Activated CD4-positive, alpha-beta T cell treated with anti-CD3 and anti-CD28 coated beads, Interleukin-2, amount 10 ng/mL, durations not matched to agents 7 days and 5 days (primary cell): ENCODE measurements at regions of chr3 and their contacts with region 1.

Region 1: DNA sequence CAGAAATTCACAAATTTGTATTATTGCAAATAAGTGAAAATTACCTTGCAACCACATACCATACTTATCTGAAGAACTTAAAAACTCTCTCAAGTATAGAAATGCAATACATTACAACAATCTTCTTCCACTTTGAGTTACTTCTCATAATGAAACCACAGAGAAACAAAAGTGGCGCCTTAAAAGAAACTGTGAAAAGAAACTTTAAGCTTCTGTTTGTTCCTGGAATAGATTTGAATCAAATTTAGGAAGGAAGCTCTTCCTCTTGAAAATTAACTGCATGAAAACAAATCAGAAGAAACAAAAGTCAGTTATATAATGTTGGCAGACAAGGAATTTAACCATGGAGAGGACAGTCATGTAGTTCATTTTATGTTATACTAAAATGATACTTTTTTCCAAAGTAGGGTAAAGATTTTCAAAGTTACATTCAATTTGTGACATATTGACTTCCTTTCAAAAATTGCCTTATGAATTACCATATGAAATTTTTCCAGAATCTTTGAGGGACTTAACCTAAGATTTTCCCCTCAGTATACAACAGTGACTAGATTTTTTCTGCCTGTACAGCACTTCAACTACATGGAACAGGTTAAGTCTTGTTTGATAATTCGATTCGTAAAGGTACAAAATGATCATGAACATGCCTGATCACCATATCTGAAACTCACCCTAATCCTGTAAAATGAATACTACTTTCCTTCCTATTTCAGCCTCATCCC is 57.6 kb upstream of the TNFSF10 start:
- DNase-seq: no peak
- H3K4me3 Mint-ChIP-seq: peak overlapping the region; percentile 64
- H3K27ac Mint-ChIP-seq: peak overlapping the region; percentile 93
- H3K4me1 Mint-ChIP-seq: peaks cover 96% of the 10 kb centered on the region
- H3K27me3 Mint-ChIP-seq: no peaks in the 10 kb centered on the region

Region 2: GRCh38 chr3:172522871-172523818 is 57.7 kb before region 1 on chr3 and contains the start of gene TNFSF10:
- CTCF ChIA-PET with region 1: interaction called, 7 read pairs
- POLR2A ChIA-PET with region 1: interaction called, 17 read pairs
- DNase-seq: peak; percentile 85
- H3K4me3 Mint-ChIP-seq: peak within 1 kb of the TSS; percentile 95
- H3K27ac Mint-ChIP-seq: peak within 1 kb of the TSS; percentile 98
- H3K4me1 Mint-ChIP-seq: peaks cover 50% of the 10 kb centered on the region
- H3K27me3 Mint-ChIP-seq: no peaks in the 10 kb centered on the region
- total RNA-seq, gene TNFSF10: 83.8 to 97.9 TPM

Region 3: GRCh38 chr3:172553526-172554252 is 27.2 kb before region 1 on chr3:
- CTCF ChIA-PET with region 1: no interaction called
- POLR2A ChIA-PET with region 1: no interaction called
- DNase-seq: no peak
- H3K4me3 Mint-ChIP-seq: no peak overlapping the region
- H3K27ac Mint-ChIP-seq: no peak overlapping the region
- H3K4me1 Mint-ChIP-seq: peaks cover 35% of the 10 kb centered on the region
- H3K27me3 Mint-ChIP-seq: no peaks in the 10 kb centered on the region

Region 4: DNA sequence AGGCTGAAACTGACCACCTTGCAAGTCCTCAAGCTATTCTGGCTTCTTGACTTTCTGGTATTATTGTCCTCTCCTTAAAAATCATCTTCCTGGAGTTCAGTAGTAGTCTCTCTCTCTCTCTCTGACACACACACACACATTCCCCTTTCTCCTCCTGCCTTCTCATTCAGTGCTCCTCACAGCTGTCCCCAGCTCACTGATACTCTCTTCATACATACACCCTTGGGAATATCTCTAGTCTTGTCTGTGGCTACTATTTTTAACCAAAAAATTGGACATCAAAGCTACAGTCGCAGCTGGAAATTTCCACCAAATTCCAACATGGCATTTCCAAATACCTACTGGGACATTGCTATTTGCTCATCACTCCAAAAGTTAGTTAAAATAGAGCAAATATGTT is 348.6 kb after region 1 on chr3:
- CTCF ChIA-PET with region 1: no interaction called
- POLR2A ChIA-PET with region 1: no interaction called
- DNase-seq: no peak
- H3K4me3 Mint-ChIP-seq: no peak overlapping the region
- H3K27ac Mint-ChIP-seq: no peak overlapping the region
- H3K4me1 Mint-ChIP-seq: no peaks in the 10 kb centered on the region
- H3K27me3 Mint-ChIP-seq: no peaks in the 10 kb centered on the region